ENCODE measurements at regions of chr2 and their contacts with region 1.

Region 1: DNA sequence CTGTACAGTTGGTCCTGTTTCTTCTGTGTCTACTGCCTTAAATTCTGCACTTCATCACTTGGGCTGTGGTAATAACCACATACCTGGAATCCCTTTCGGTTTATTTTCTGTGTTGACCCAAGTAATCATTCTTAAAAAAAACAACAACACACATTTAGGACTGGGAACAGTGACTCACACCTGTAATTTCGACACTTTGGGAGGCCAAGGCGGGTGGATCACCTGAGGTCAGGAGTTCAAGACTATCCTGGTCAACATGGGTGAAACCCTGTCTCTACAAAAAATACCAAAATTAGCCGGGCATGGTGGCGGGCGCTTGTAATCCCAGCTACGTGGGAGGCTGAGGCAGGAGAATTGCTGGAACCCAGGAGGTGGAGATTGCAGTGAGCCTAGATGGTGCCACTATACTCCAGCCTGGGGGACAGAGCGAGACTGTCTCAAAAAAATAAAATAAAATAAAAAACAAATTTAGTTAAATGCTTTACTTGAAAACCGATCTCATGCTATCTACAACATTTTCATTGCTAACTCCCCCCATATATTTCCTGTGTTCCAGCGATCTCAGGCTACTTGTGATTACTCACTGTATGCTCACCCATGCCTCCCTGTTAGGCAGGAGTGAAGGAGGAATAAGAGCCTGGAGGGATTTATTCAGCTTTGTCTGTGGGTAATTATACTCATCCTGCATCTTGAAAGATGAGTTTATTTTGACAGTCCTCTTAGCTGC is 18.2 kb downstream of the ACSL3 start:
- DNase-seq: no peak
- ATAC-seq: no peak
- H3K4me3 ChIP-seq: no peak overlapping the region
- H3K27ac ChIP-seq: no peak overlapping the region
- H3K4me1 ChIP-seq: no peaks in the 10 kb centered on the region
- H3K27me3 ChIP-seq: no peaks in the 10 kb centered on the region
- CTCF ChIP-seq: no peak
- EP300 ChIP-seq: no peak
- POLR2A ChIP-seq: no peak
- RAD21 ChIP-seq: no peak

Region 2: GRCh38 chr2:222860740-222861410 is 18.2 kb before region 1 on chr2 and contains the start of gene ACSL3:
- CTCF ChIA-PET with region 1: interaction called, 7 read pairs
- POLR2A ChIA-PET with region 1: interaction called, 7 read pairs
- RAD21 ChIA-PET with region 1: interaction called, 3 read pairs
- SMC1A ChIA-PET with region 1: interaction called, 29 read pairs
- in situ Hi-C with region 1: no loop called
- intact Hi-C with region 1: no loop called
- DNase-seq: peak; percentile 66
- ATAC-seq: peak; percentile 98
- H3K4me3 ChIP-seq: peak within 1 kb of the TSS; percentile 67
- H3K27ac ChIP-seq: peak within 1 kb of the TSS; percentile 74
- H3K4me1 ChIP-seq: peaks cover 6% of the 10 kb centered on the region
- H3K27me3 ChIP-seq: no peaks in the 10 kb centered on the region
- CTCF ChIP-seq: no peak; a peak in 1 of 6 replicates
- EP300 ChIP-seq: no peak
- POLR2A ChIP-seq: peak; percentile 100
- RAD21 ChIP-seq: no peak
- polyA plus RNA-seq, gene ACSL3: 15.6 to 24.0 TPM

Region 3: GRCh38 chr2:222892321-222892720 is 13.3 kb after region 1 on chr2:
- CTCF ChIA-PET with region 1: interaction called, 3 read pairs
- POLR2A ChIA-PET with region 1: no interaction called
- RAD21 ChIA-PET with region 1: no interaction called
- SMC1A ChIA-PET with region 1: interaction called, 10 read pairs
- in situ Hi-C with region 1: no loop called
- intact Hi-C with region 1: no loop called
- DNase-seq: no peak
- ATAC-seq: no peak
- H3K4me3 ChIP-seq: no peak overlapping the region
- H3K27ac ChIP-seq: no peak overlapping the region
- H3K4me1 ChIP-seq: no peaks in the 10 kb centered on the region
- H3K27me3 ChIP-seq: no peaks in the 10 kb centered on the region
- CTCF ChIP-seq: no peak
- EP300 ChIP-seq: no peak
- POLR2A ChIP-seq: no peak
- RAD21 ChIP-seq: no peak

Region 4: DNA sequence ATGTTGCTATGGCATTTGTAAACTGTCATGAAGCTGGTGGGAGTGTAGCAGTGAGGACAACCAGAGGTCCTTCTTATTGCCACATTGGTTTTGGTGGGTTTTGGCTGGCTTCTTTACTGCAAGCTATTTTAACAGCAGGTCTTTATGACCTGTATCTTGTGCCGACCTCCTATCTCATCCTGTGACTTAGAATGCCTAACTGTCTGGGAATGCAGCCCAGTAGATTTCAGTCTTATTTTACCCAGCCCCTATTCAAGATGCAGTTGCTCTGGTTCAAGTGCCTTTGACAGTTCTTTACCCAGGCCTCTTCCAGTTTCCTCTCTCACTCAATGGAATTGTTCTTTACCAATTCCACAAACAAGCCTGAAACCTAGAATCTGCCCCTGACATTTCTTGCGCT is 318.0 kb after region 1 on chr2:
- CTCF ChIA-PET with region 1: no interaction called
- POLR2A ChIA-PET with region 1: no interaction called
- RAD21 ChIA-PET with region 1: no interaction called
- SMC1A ChIA-PET with region 1: no interaction called
- in situ Hi-C with region 1: no loop called
- intact Hi-C with region 1: no loop called
- DNase-seq: no peak
- ATAC-seq: no peak
- H3K4me3 ChIP-seq: no peak overlapping the region
- H3K27ac ChIP-seq: no peak overlapping the region
- H3K4me1 ChIP-seq: no peaks in the 10 kb centered on the region
- H3K27me3 ChIP-seq: no peaks in the 10 kb centered on the region
- CTCF ChIP-seq: no peak
- EP300 ChIP-seq: no peak
- POLR2A ChIP-seq: no peak
- RAD21 ChIP-seq: no peak